Mammary epithelial cell (primary cell): ENCODE measurements at regions of chr11 and their contacts with region 1.

Region 1: GRCh38 chr11:69718147-69718546 is 14.3 kb upstream of the FGF19 start:
- DNase-seq: no peak
- H3K4me3 ChIP-seq: no peak overlapping the region
- H3K27ac ChIP-seq: no peak overlapping the region
- H3K4me1 ChIP-seq: no peaks in the 10 kb centered on the region
- H3K27me3 ChIP-seq: peaks cover 2% of the 10 kb centered on the region
- CTCF ChIP-seq: peak; percentile 11 to 27

Region 2: GRCh38 chr11:69909561-69910496 is 191.7 kb after region 1 on chr11:
- CTCF ChIA-PET with region 1: no interaction called
- dilution Hi-C with region 1: no loop called
- in situ Hi-C with region 1: loop called in 1 of 2 experiments (anchors 10 kb)
- intact Hi-C with region 1: no loop called
- DNase-seq: no peak
- H3K4me3 ChIP-seq: no peak overlapping the region
- H3K27ac ChIP-seq: no peak overlapping the region
- H3K4me1 ChIP-seq: peaks cover 28% of the 10 kb centered on the region
- H3K27me3 ChIP-seq: no peaks in the 10 kb centered on the region
- CTCF ChIP-seq: peak; percentile 35 to 65

Region 3: GRCh38 chr11:70358753-70359152 is 640.6 kb after region 1 on chr11:
- CTCF ChIA-PET with region 1: no interaction called
- dilution Hi-C with region 1: loop called (anchors 10 kb)
- in situ Hi-C with region 1: no loop called
- intact Hi-C with region 1: no loop called
- DNase-seq: no peak
- H3K4me3 ChIP-seq: no peak overlapping the region
- H3K27ac ChIP-seq: no peak overlapping the region
- H3K4me1 ChIP-seq: no peaks in the 10 kb centered on the region
- H3K27me3 ChIP-seq: no peaks in the 10 kb centered on the region
- CTCF ChIP-seq: no peak